ENCODE measurements at regions of chr9 and their contacts with region 1.

Region 1: DNA sequence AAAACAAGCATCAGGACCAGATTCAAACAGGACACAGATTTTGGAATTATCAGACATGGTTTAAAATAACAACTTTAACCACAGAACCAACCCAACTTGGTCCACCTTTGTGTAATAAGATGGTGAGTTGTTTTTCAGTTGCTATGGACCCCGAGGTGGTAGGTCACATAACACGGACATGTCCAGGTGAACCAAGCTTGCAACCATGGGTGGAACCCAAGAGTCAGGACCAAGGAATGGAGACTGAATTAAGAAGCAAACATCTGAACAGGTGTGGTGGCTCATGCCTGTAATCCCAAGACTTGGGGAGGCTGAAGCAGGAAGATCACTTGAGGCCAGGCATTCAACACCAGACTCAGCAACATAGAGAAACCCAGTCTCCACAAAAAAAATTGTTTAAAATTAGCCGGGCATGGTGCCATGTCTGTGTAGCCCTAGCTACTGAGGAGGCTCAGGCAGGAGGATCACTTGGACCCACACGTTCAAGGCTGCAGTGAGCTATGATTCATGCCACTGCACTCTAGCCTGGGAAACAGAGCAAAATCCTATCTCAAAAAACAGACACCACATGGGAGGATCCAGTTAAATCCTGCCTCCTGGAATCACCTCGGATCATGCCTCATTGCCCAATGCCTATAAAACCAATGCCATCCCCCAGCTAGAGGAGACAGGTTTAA is 10.6 kb downstream of the PTBP3 start:
- DNase-seq: no peak
- ATAC-seq: no peak
- H3K4me3 ChIP-seq: no peak overlapping the region
- H3K4me3 Mint-ChIP-seq: peak overlapping the region in 1 of 3 donors; percentile 37
- H3K27ac ChIP-seq: no peak overlapping the region
- H3K27ac Mint-ChIP-seq: peak overlapping the region; percentile 10 to 56
- H3K4me1 ChIP-seq: peaks cover 3 to 23% of the 10 kb centered on the region in 2 experiments
- H3K4me1 Mint-ChIP-seq: peaks cover 63 to 85% (median 67%) of the 10 kb centered on the region in 3 donors
- H3K27me3 ChIP-seq: no peaks in the 10 kb centered on the region
- H3K27me3 Mint-ChIP-seq: no peaks in the 10 kb centered on the region

Region 2: GRCh38 chr9:112166172-112167140 is 156.4 kb before region 1 on chr9:
- CTCF ChIA-PET with region 1: no interaction called
- POLR2A ChIA-PET with region 1: interaction called in 1 of 2 experiments, 16 read pairs
- DNase-seq: no peak
- ATAC-seq: no peak
- H3K4me3 ChIP-seq: no peak overlapping the region
- H3K4me3 Mint-ChIP-seq: no peak overlapping the region
- H3K27ac ChIP-seq: no peak overlapping the region
- H3K27ac Mint-ChIP-seq: no peak overlapping the region
- H3K4me1 ChIP-seq: peaks cover 0 to 11% of the 10 kb centered on the region in 2 experiments
- H3K4me1 Mint-ChIP-seq: peaks cover 40 to 53% (median 49%) of the 10 kb centered on the region in 3 donors
- H3K27me3 ChIP-seq: no peaks in the 10 kb centered on the region
- H3K27me3 Mint-ChIP-seq: no peaks in the 10 kb centered on the region

Measured in T-cell (primary cell).